Naive thymus-derived CD4-positive, alpha-beta T cell (primary cell): ENCODE measurements at regions of chr2 and their contacts with region 1.

Region 1: DNA sequence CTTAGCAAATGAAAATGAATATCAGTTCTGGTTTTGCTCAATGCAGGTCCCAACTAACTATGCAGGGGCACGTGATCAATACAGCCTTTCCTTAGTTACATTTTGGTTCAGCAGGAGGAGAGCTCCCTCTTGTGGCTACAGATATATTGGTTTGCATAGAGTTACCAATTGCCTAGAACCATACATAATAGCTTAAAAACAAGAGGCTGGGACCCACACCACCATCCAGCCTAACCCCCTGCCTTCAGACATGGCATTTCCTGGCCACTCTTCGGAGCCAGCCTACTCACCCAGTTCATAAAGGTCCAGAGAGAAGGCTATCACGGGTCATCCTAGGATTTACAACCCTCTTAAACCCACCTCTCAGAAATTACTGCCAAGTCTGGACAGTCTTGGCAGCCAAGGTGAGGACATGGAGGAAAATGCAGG is 10.5 kb downstream of the CCDC93 start:
- DNase-seq: peak in 8 of 9 donors; percentile 26 to 77 (median 68)
- ATAC-seq: peak; percentile 99
- H3K4me3 ChIP-seq: no peak overlapping the region
- H3K4me3 Mint-ChIP-seq: no peak overlapping the region
- H3K27ac ChIP-seq: no peak overlapping the region
- H3K27ac Mint-ChIP-seq: peak overlapping the region in 7 of 9 donors; percentile 9 to 84 (median 59)
- H3K4me1 ChIP-seq: peaks cover 0 to 8% of the 10 kb centered on the region in 2 donors
- H3K4me1 Mint-ChIP-seq: peaks cover 11 to 35% (median 27%) of the 10 kb centered on the region in 7 donors
- H3K27me3 ChIP-seq: no peaks in the 10 kb centered on the region
- H3K27me3 Mint-ChIP-seq: no peaks in the 10 kb centered on the region

Region 2: DNA sequence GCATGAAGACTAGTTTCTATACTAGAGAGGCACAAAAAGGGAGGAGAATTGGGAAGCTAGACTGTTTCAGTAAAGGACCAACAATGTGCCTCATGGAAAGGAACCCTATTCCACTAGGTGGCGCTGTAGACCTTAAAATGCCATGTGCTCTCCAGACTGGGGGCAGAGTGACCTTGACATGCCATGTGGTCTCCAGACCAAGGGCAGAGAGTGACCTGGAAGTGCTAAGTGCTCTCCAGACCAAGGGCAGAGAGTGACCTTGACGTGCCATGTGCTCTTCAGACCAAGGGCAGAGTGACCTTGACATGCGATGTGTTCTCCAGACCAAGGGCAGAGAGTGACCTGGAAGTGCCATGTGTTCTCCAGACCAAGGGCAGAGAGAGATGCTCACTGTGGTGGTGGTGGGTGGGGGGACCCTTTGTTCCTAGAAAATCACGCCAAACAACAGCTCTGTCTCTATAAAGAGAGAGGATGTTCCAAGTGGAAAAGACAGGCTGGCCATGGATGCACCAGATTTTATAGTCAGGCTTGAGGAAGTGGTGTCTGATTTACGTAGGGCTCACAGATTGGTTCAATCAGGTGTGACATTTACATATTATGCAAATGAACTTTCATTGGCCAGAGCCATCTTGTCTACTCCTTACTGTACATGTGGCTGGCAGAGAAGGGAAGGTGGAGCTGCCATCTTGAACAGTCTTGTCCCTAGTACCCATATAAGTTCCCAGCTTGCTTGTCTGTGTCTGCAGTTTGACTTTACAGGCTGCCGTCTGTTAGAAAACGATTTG is 532.9 kb before region 1 on chr2:
- CTCF ChIA-PET with region 1: no interaction called
- POLR2A ChIA-PET with region 1: no interaction called
- intact Hi-C with region 1: loop called in 1 of 2 experiments (anchors 2 kb)
- DNase-seq: no peak
- ATAC-seq: no peak
- H3K4me3 ChIP-seq: no peak overlapping the region
- H3K4me3 Mint-ChIP-seq: no peak overlapping the region
- H3K27ac ChIP-seq: no peak overlapping the region
- H3K27ac Mint-ChIP-seq: no peak overlapping the region
- H3K4me1 ChIP-seq: no peaks in the 10 kb centered on the region
- H3K4me1 Mint-ChIP-seq: no peaks in the 10 kb centered on the region
- H3K27me3 ChIP-seq: no peaks in the 10 kb centered on the region
- H3K27me3 Mint-ChIP-seq: no peaks in the 10 kb centered on the region

Region 3: GRCh38 chr2:117835990-117836760 is 167.2 kb before region 1 on chr2:
- CTCF ChIA-PET with region 1: interaction called, 3 read pairs
- POLR2A ChIA-PET with region 1: no interaction called
- intact Hi-C with region 1: loop called (anchors 1 kb)
- DNase-seq: peak; percentile 25 to 50 (median 35)
- ATAC-seq: peak; percentile 77
- H3K4me3 ChIP-seq: no peak overlapping the region
- H3K4me3 Mint-ChIP-seq: peak overlapping the region; percentile 63 to 91 (median 88)
- H3K27ac ChIP-seq: peak overlapping the region; percentile 15
- H3K27ac Mint-ChIP-seq: peak overlapping the region in 6 of 9 donors; percentile 53 to 97 (median 83)
- H3K4me1 ChIP-seq: no peaks in the 10 kb centered on the region
- H3K4me1 Mint-ChIP-seq: peaks cover 4 to 22% (median 20%) of the 10 kb centered on the region in 7 donors
- H3K27me3 ChIP-seq: no peaks in the 10 kb centered on the region
- H3K27me3 Mint-ChIP-seq: peaks cover 0 to 2% (median 0%) of the 10 kb centered on the region in 5 donors

Region 4: GRCh38 chr2:117958186-117958585 is 45.2 kb before region 1 on chr2:
- CTCF ChIA-PET with region 1: interaction called, 3 read pairs
- POLR2A ChIA-PET with region 1: no interaction called
- intact Hi-C with region 1: loop called (anchors 1 to 2 kb)
- DNase-seq: no peak
- ATAC-seq: no peak
- H3K4me3 ChIP-seq: no peak overlapping the region
- H3K4me3 Mint-ChIP-seq: no peak overlapping the region
- H3K27ac ChIP-seq: no peak overlapping the region
- H3K27ac Mint-ChIP-seq: no peak overlapping the region
- H3K4me1 ChIP-seq: no peaks in the 10 kb centered on the region
- H3K4me1 Mint-ChIP-seq: no peaks in the 10 kb centered on the region
- H3K27me3 ChIP-seq: no peaks in the 10 kb centered on the region
- H3K27me3 Mint-ChIP-seq: no peaks in the 10 kb centered on the region